ENCODE measurements at regions of chr12 and their contacts with region 1.

Region 1: DNA sequence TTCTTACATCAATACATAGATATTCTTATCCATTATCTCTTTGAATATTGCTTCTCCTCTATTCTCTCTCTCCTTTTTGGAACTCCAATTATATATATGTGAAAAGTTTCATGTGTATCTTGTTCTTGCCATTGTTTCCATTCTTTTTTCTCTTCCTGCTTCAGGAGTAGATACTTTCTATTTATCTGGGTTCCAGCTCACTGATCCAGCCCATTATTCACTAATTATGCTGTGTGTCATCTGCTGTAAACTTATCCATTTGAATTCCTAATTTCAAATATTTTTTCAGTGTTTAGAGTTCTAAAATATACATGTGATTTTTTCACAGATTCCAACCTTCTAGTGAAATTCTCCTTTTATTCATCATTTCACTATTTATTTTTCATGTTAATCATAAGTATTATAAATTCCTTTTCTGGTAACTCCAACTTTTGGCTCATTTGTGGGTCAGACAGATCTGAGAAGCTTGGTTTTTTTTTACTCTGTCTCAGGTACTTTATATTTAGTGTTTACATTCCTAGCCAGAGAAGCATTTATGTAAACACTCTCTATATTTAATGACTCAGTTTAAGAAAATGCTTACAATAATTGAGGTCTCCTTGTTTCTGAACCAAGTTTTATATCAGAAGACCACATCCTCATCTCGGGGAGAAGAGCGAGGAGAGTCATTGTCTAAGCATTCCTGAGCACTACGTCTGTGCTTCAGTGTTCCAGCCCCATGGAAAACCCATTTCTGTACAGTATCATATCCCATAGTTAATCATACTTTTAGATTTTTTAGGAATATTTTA is 15.9 kb upstream of the AMIGO2 start:
- DNase-seq: no peak
- ATAC-seq: no peak
- H3K4me3 ChIP-seq: no peak overlapping the region
- H3K4me3 Mint-ChIP-seq: no peak overlapping the region
- H3K27ac ChIP-seq: no peak overlapping the region
- H3K27ac Mint-ChIP-seq: no peak overlapping the region
- H3K4me1 ChIP-seq: no peaks in the 10 kb centered on the region
- H3K4me1 Mint-ChIP-seq: peaks cover 35% of the 10 kb centered on the region
- H3K27me3 ChIP-seq: no peaks in the 10 kb centered on the region
- H3K27me3 Mint-ChIP-seq: no peaks in the 10 kb centered on the region
- CTCF ChIP-seq: no peak

Region 2: GRCh38 chr12:47039756-47040155 is 55.9 kb before region 1 on chr12:
- CTCF ChIA-PET with region 1: no interaction called
- POLR2A ChIA-PET with region 1: no interaction called
- intact Hi-C with region 1: loop called in 1 of 2 experiments (anchors 10 kb)
- DNase-seq: no peak
- ATAC-seq: no peak
- H3K4me3 ChIP-seq: no peak overlapping the region
- H3K4me3 Mint-ChIP-seq: no peak overlapping the region
- H3K27ac ChIP-seq: no peak overlapping the region
- H3K27ac Mint-ChIP-seq: no peak overlapping the region
- H3K4me1 ChIP-seq: no peaks in the 10 kb centered on the region
- H3K4me1 Mint-ChIP-seq: peaks cover 3% of the 10 kb centered on the region
- H3K27me3 ChIP-seq: no peaks in the 10 kb centered on the region
- H3K27me3 Mint-ChIP-seq: no peaks in the 10 kb centered on the region
- CTCF ChIP-seq: no peak